AG04450 (cell line): ENCODE measurements at regions of chr5 and their contacts with region 1.

Region 1: GRCh38 chr5:82225525-82226172 is 52.5 kb downstream of the RPS23 start:
- DNase-seq: peak; percentile 52
- H3K4me3 ChIP-seq: no peak overlapping the region
- H3K27ac ChIP-seq: no peak overlapping the region
- H3K27me3 ChIP-seq: no peaks in the 10 kb centered on the region
- CTCF ChIP-seq: peak; percentile 92

Region 2: GRCh38 chr5:81425569-81425968 is 800.1 kb before region 1 on chr5:
- CTCF ChIA-PET with region 1: interaction called, 20 read pairs
- POLR2A ChIA-PET with region 1: no interaction called
- DNase-seq: no peak
- H3K4me3 ChIP-seq: no peak overlapping the region
- H3K27ac ChIP-seq: no peak overlapping the region
- H3K27me3 ChIP-seq: no peaks in the 10 kb centered on the region
- CTCF ChIP-seq: peak; percentile 61

Region 3: GRCh38 chr5:81506900-81507588 is 718.6 kb before region 1 on chr5:
- CTCF ChIA-PET with region 1: interaction called, 17 read pairs
- POLR2A ChIA-PET with region 1: no interaction called
- DNase-seq: peak; percentile 75
- H3K4me3 ChIP-seq: no peak overlapping the region
- H3K27ac ChIP-seq: no peak overlapping the region
- H3K27me3 ChIP-seq: no peaks in the 10 kb centered on the region
- CTCF ChIP-seq: peak; percentile 96

Region 4: DNA sequence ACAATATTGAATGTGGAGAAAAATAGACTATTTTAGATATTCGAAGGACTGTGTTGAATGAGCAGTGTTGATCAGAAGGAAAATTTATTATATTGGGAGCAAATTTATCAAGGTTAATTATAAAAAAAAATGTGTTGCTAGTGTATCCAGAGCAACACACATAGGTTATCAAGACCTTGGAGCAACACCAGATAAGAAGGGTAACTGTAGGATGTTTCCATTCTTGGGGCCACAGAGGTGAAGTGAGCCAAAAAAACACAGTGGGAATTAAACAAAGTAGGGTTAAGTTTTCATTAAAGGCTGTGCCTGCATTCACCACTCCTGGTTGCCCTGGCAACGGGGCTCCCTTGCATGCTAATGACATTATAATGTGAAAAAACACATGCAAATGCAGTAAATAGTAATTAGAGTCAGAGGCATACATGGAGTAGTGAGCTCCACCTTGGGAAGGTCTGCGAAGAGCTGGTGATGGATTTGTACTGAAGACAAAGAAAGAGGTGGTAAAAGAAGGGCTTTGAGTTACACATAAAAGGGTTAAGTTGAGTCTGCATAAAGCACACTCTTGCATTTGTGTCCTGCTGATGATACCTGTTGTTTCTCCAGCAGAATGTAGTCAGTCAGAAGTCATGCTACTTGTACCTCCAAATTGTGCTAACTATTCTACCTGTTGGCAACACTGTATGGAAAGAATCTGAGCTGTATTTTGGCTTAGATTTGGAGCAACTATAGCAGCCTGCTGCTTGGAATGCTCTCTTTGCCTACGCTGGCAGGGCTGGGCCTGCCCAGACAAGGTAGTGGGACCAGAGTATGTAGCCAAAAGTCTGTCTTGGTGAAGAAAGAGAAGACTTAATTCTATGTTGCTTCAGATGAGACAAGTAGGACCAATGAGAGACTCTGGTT is 194.2 kb before region 1 on chr5:
- CTCF ChIA-PET with region 1: no interaction called
- POLR2A ChIA-PET with region 1: interaction called, 10 read pairs
- DNase-seq: no peak
- H3K4me3 ChIP-seq: no peak overlapping the region
- H3K27ac ChIP-seq: no peak overlapping the region
- H3K27me3 ChIP-seq: no peaks in the 10 kb centered on the region
- CTCF ChIP-seq: no peak

Region 5: GRCh38 chr5:82259172-82259800 is 33.6 kb after region 1 on chr5:
- CTCF ChIA-PET with region 1: interaction called, 15 read pairs
- POLR2A ChIA-PET with region 1: no interaction called
- DNase-seq: peak; percentile 11
- H3K4me3 ChIP-seq: no peak overlapping the region
- H3K27ac ChIP-seq: no peak overlapping the region
- H3K27me3 ChIP-seq: no peaks in the 10 kb centered on the region
- CTCF ChIP-seq: peak; percentile 67